BJ (cell line): ENCODE measurements at regions of chr17 and their contacts with region 1.

Region 1: DNA sequence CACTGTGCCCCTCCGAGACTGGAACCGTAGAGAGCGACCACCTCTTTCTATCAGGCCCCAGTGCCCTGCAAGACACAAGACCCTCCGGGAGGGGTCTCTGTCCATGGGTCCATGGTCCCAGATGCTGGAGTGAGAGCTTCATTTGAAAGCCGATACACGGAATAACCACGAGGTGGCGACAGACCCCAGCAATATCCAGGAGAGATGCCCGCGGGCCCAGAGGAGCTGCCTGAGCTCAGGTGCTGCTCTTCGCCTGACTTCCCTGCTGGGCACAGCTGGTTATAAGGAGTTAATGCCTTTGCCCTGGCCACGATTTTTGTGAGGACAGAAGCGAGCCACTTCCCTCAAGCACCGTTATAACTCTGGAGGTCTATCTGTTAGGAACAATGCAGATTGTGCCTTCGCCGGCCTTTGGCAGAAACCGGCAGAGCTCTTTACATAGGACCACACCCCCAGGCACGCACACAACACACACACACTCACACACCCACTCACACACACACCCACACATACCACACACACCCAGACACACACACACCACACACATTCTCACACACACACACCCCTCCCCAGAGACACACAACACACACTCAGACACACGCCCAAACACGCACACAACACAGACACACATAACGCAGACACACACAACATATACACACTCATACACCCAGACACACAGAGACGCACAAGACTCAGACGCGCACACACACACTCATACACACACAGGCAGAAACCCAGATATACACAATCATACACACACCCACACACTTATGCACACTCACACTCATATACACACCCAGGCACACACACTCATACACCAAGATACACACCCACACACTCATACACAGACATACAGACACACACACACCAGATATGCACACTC is 436.4 kb downstream of the SOX9 start:
- DNase-seq: no peak
- H3K4me3 ChIP-seq: no peak overlapping the region
- H3K27me3 ChIP-seq: no peaks in the 10 kb centered on the region
- CTCF ChIP-seq: peak; percentile 84

Region 2: DNA sequence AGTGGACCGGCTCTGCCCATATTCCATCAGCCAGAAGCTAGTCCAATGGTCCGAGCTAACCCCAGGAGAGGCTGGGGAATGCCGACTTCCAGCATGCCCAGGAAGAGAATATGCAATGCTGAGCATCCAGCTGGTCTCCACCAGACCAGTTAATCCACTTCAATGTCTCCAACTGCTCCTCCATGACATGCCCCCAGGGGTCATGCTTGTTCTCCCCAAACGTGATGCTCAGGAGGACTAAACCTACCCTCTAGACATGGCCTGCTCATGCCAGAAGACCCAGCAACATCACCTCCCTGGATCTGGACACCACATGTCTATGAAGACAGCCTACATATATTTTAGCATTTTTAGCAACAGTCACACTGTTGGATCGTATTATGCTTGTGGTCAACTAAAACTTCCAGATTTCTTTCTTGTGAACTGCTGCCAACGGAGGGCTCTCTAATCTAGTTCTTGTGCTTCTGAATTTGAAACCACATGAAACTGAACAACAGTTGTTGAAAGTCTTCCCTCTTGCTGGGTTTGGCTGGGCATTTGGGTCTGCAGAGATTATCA is 191.2 kb before region 1 on chr17:
- CTCF ChIA-PET with region 1: no interaction called
- POLR2A ChIA-PET with region 1: no interaction called
- DNase-seq: peak; percentile 49
- H3K4me3 ChIP-seq: no peak overlapping the region
- H3K27me3 ChIP-seq: no peaks in the 10 kb centered on the region
- CTCF ChIP-seq: 0 out of 2 replicates have a peak, but pooled peaks have one; percentile 2

Region 3: DNA sequence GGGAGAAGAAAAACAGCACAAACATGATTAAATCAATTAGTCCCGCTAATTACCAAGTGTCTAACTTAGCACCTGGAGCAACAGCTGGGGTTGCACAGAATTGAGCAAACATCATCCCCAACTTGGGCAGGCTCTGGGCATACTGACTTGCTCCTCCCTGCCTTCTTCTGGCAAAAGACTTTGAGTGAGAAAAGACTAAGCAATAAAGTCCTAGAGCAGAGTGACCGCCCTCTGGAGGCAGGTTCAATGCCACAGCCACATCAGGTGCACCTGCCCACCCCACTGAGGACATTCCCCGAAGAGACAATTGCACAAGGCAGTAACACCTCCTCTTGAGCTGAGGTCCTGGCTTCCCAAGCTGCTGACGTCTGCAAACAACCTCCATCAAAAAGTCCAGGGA is 78.1 kb before region 1 on chr17:
- CTCF ChIA-PET with region 1: no interaction called
- POLR2A ChIA-PET with region 1: no interaction called
- DNase-seq: no peak
- H3K4me3 ChIP-seq: no peak overlapping the region
- H3K27me3 ChIP-seq: no peaks in the 10 kb centered on the region
- CTCF ChIP-seq: no peak

Region 4: GRCh38 chr17:72580321-72581127 is 23.3 kb after region 1 on chr17:
- CTCF ChIA-PET with region 1: interaction called, 47 read pairs
- POLR2A ChIA-PET with region 1: no interaction called
- DNase-seq: no peak
- H3K4me3 ChIP-seq: no peak overlapping the region
- H3K27me3 ChIP-seq: no peaks in the 10 kb centered on the region
- CTCF ChIP-seq: no peak

Region 5: GRCh38 chr17:72699545-72699944 is 142.4 kb after region 1 on chr17:
- CTCF ChIA-PET with region 1: interaction called, 13 read pairs
- POLR2A ChIA-PET with region 1: no interaction called
- DNase-seq: no peak
- H3K4me3 ChIP-seq: no peak overlapping the region
- H3K27me3 ChIP-seq: no peaks in the 10 kb centered on the region
- CTCF ChIP-seq: no peak

Region 6: DNA sequence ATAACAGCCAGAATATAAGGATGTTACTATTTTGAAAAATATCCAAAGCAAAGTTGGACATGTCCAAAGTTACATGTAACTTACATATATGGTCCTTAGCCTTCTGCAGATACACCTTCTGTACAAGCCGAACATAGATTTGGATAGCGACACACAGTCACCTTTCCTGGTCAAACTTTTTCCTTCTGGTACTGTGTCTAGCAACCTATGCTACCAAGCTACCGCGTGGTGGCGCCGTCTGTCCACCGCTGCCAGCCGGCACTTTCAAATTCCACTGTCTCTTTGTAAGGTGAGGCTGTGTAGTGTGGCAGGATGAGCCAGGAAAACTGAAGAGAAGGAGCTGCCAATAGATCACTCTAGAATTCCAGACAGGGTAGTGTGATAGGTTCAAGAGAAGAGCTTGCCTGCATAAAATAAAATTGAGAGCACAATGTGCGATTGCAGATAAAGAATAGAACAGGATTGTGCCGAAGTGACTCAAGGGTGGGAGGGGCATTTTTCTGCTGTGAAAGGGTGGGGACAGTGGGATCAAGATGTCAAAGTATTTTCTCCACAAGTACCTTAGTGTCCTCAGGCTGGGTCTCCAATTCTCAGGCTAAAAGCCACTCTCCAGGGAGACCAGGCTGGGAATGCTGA is 168.4 kb after region 1 on chr17:
- CTCF ChIA-PET with region 1: interaction called, 184 read pairs
- POLR2A ChIA-PET with region 1: no interaction called
- DNase-seq: no peak
- H3K4me3 ChIP-seq: no peak overlapping the region
- H3K27me3 ChIP-seq: no peaks in the 10 kb centered on the region
- CTCF ChIP-seq: peak; percentile 97

Region 7: GRCh38 chr17:72795946-72796345 is 238.8 kb after region 1 on chr17:
- CTCF ChIA-PET with region 1: no interaction called
- POLR2A ChIA-PET with region 1: no interaction called
- DNase-seq: no peak
- H3K4me3 ChIP-seq: no peak overlapping the region
- H3K27me3 ChIP-seq: no peaks in the 10 kb centered on the region
- CTCF ChIP-seq: no peak

Region 8: GRCh38 chr17:73156166-73156840 is 599.1 kb after region 1 on chr17:
- CTCF ChIA-PET with region 1: interaction called, 26 read pairs
- POLR2A ChIA-PET with region 1: no interaction called
- DNase-seq: no peak
- H3K4me3 ChIP-seq: no peak overlapping the region
- H3K27me3 ChIP-seq: peaks cover 2% of the 10 kb centered on the region
- CTCF ChIP-seq: peak; percentile 93

Region 9: GRCh38 chr17:73192894-73193701 is 635.9 kb after region 1 on chr17 and contains the start of gene COG1:
- CTCF ChIA-PET with region 1: interaction called, 15 read pairs
- POLR2A ChIA-PET with region 1: no interaction called
- DNase-seq: no peak
- H3K4me3 ChIP-seq: peak within 1 kb of the TSS; percentile 95
- H3K27me3 ChIP-seq: no peaks in the 10 kb centered on the region
- CTCF ChIP-seq: no peak
- polyA plus RNA-seq, gene COG1: 39.4 and 54.9 TPM in 2 replicates